Posterior vena cava (tissue), 2 donors: ENCODE measurements at regions of chr4 and their contacts with region 1.

Region 1: DNA sequence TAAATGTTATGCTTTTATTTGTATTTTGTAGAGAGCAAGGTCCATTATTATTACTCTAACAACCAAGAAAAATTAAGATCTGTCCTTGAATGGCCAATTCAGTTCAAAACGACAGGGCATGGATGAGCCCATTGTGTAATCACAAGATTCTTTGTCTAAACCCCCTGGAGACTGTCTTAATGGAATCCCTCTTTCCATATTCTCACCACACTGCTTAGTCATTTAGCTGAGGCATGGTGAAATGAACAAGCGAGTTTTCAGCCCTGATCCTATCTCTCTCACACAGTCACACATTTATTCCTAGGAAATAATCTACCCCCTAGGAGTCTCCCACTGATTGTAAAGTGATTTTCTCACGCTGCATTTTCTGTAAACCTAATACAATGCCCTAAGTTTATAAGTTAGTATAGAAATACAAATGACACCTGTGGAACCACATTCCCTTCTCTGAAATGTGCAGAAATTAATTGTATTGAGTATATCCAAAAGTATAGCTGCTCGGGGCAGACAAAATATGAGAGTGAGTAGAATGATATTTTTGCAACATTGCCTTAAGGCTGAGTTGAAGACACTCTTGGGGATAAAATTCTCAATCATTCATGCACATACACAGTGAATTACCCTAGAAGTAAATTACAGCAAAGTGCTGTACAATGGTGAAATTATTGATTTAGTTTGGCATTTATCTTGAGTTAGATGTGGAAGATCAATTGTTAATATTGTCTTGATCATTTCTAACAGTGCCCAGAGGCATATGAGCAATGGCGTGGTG is 119.7 kb upstream of the PCDH7 start:
- DNase-seq: no peak

Region 2: GRCh38 chr4:30630431-30630830 is 30.0 kb after region 1 on chr4:
- intact Hi-C with region 1: loop called in 1 of 2 experiments (anchors 2 kb)
- DNase-seq: no peak